ENCODE measurements at regions of chr22 and their contacts with region 1.

Region 1: DNA sequence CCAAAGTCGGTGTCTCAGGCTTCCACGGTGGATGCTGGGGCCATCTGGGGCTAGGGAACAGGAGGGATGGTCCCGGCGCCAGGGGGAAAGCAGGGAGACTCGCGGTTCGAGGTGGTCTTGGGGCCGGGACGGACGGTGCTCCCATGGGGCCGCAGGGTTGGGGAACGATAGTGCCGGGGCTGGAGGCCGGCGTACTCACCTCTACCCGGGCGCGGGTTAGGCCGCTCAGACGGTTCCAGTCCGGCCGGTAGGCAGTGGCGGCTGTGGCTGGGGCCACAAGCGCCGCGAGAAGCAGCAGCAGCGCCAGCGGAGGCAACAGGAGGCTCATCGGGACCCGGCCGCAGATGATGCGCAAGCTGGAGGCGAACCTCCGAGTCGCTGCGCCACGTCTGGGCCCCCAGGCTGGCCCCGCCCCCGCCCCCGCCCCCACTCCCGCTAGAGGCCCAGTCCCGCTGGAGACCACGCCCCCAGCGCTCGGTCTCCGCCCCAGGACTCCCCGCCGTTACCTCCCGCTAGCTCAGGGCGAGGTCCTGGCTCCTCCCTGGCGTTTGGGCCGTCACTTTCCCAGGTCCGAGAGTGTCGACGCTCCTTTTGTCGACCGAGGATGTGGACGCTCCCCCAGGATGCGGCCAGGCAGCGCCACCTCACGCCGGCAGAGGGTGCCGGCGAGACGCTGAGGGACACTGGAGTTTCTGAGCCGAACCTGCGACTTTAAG is at the start of gene SELENOM:
- DNase-seq: peak; percentile 98
- H3K4me3 ChIP-seq: peak within 1 kb of the TSS; percentile 45 to 71 (median 56)
- H3K27ac ChIP-seq: peak within 1 kb of the TSS; percentile 86 to 97 (median 96)
- H3K4me1 ChIP-seq: peaks cover 17 to 41% (median 27%) of the 10 kb centered on the region in 4 donors
- H3K27me3 ChIP-seq: no peaks in the 10 kb centered on the region
- CTCF ChIP-seq: peak; percentile 86 to 98 (median 92)
- EP300 ChIP-seq: no peak
- POLR2A ChIP-seq: peak; percentile 73
- total RNA-seq, gene SELENOM: 247 to 334 (median 315) TPM

Region 2: DNA sequence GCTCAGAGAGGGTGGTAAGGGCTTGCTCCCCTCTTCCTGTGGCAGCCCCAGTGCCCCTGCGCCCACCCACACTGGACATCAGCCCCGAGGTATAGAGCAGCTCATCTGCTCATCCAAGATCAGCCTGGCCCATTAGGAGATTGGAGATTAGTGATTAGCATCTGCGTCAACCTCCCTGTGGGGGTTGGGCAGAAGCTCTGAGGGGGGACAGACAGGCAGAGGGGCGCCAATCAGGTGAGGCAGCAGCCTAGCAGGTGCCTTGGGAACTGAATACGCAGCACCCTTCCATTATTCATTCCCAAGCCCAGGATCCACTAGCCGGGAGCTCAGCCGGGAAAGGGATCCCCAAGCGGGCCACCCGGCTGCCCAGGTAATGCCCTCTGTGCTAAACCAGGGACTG is 15.2 kb before region 1 on chr22:
- in situ Hi-C with region 1: no loop called
- intact Hi-C with region 1: loop called (anchors 1 kb)
- DNase-seq: no peak
- H3K4me3 ChIP-seq: peak overlapping the region; percentile 24 to 40 (median 35)
- H3K27ac ChIP-seq: peak overlapping the region; percentile 73 to 97 (median 96)
- H3K4me1 ChIP-seq: peaks cover 0 to 24% (median 4%) of the 10 kb centered on the region in 4 donors
- H3K27me3 ChIP-seq: no peaks in the 10 kb centered on the region
- CTCF ChIP-seq: no peak
- EP300 ChIP-seq: no peak
- POLR2A ChIP-seq: no peak

Region 3: DNA sequence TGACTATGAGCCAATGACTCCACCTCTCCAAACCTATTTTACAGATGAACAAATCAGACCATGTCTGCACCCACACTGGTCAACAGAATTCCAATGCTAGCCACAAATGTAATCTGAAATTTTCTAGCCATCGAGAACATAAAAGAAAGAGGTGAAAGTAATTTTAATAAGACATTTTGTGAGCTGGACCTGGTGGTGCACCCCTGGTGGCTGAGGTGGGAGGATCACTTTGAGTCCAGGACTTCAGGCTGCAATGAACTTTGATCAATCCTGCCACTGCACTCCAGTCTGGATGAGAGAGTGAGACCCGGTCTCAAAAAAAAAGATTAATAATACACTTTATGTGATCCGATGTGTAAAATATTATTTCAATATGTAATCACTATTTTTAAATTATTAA is 43.3 kb after region 1 on chr22:
- in situ Hi-C with region 1: no loop called
- intact Hi-C with region 1: loop called (anchors 5 kb)
- DNase-seq: no peak
- H3K4me3 ChIP-seq: no peak overlapping the region
- H3K27ac ChIP-seq: no peak overlapping the region
- H3K4me1 ChIP-seq: peaks cover 0 to 16% (median 3%) of the 10 kb centered on the region in 4 donors
- H3K27me3 ChIP-seq: no peaks in the 10 kb centered on the region
- CTCF ChIP-seq: peak; percentile 26 to 48 (median 32)
- EP300 ChIP-seq: no peak
- POLR2A ChIP-seq: no peak

Region 4: GRCh38 chr22:31439808-31440207 is 332.5 kb after region 1 on chr22:
- in situ Hi-C with region 1: no loop called
- intact Hi-C with region 1: no loop called
- DNase-seq: no peak
- H3K4me3 ChIP-seq: no peak overlapping the region
- H3K27ac ChIP-seq: no peak overlapping the region
- H3K4me1 ChIP-seq: no peaks in the 10 kb centered on the region
- H3K27me3 ChIP-seq: no peaks in the 10 kb centered on the region
- CTCF ChIP-seq: no peak
- EP300 ChIP-seq: no peak
- POLR2A ChIP-seq: no peak

Measured in transverse colon (tissue), 4 donors.